ENCODE measurements at regions of chr5 and their contacts with region 1.

Region 1: DNA sequence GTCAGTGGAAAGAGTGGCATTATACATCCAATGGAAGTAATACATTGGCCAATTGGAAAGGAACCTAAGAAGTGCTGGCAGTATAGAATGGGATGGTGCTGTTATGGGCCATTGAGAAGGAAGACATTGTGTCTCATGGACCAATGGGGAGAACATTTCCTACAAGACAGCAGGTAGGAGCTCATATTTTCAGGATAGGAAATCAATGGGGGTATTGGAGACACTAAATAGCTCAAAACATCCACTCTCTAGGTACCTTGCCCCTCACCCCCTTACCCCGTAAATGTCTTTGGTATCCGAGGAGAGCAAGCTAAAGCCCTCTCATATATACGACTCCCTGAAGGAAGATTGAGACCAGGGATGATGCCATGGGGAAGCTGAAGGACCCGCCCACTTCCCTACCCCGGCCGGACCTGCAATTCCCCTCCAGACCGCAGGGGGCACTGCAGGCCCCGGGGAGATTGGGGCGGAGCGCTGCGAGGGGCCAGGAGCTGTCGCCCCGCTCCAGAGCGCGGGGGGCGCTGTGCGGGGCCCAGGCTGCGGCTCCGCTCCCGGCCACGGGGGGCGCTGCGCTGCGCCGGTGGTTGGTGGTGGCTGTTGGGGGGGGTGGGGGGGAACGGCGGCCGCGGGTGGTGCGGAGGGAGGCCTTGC is at the start of gene KDM3B:
- DNase-seq: no peak
- H3K4me3 ChIP-seq: peak within 1 kb of the TSS; percentile 75
- CTCF ChIP-seq: peak; percentile 95

Region 2: GRCh38 chr5:138331449-138332368 is 20.5 kb before region 1 on chr5 and contains the start of gene CDC25C:
- CTCF ChIA-PET with region 1: interaction called, 267 read pairs
- POLR2A ChIA-PET with region 1: interaction called, 121 read pairs
- DNase-seq: peak; percentile 95
- H3K4me3 ChIP-seq: peak within 1 kb of the TSS; percentile 82
- CTCF ChIP-seq: no peak

Region 3: DNA sequence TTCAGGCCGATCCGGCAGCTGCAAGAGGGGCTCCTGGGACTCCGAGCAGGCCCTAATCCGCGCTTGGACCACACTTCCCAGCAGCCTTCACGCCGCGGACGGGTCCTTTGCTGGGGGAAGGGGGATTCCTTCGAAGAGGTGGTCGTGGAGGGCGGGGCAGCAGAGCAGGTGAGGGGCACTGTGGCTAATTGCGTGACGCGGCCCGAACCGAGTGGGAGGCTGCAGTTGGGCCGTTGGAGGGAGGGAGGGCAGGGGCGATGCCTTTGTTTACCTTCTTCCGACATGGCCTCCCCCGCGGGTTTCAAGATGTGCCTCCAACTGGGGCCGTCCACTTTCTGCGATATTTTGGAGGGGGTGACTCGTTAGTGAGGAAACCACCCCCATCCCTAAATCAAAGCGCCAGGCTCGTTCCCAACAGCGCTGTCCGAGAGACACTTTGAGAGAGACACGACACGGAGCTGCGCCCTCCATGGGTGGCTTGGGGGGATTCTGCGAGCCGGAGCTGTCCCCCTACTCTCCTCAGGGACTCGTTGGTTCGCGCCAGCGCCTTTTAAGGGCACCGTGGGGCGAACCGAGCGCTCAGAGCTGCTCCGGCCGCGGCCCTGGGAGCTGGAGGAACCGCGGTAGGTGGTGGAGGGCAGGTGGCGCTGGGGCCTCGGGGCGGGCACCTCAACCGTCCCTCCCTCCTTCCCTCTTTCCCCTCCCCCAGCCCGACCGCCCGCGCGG is 14.3 kb before region 1 on chr5 and contains the start of gene FAM53C:
- CTCF ChIA-PET with region 1: interaction called, 267 read pairs
- POLR2A ChIA-PET with region 1: interaction called, 121 read pairs
- DNase-seq: peak; percentile 52
- H3K4me3 ChIP-seq: peak within 1 kb of the TSS; percentile 80
- CTCF ChIP-seq: no peak

Region 4: DNA sequence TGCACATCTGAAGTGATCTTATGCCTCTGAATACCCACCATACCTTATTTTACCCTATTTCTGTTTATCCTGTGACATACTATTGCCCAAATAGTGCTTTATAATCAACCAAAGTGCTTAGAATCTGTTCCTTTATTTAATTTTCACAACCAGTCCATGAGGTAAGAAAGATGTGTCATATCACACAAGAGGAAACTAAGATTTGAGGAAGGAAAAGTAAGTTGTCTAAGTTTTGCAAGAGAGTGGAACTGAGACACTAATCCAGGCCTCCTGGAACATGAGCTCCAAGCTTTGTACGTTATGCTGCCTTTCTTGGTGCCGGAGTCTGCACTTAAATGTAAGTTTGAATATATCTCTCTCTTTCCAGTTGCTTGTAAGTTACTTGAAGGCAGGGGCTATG is 17.5 kb after region 1 on chr5:
- CTCF ChIA-PET with region 1: interaction called, 70 read pairs
- POLR2A ChIA-PET with region 1: interaction called, 5 read pairs
- DNase-seq: no peak
- H3K4me3 ChIP-seq: no peak overlapping the region
- CTCF ChIP-seq: no peak